Activated B cell treated with CpG ODN at 0.5 μM for 24 hours (primary cell): ENCODE measurements at regions of chr11 and their contacts with region 1.

Region 1: DNA sequence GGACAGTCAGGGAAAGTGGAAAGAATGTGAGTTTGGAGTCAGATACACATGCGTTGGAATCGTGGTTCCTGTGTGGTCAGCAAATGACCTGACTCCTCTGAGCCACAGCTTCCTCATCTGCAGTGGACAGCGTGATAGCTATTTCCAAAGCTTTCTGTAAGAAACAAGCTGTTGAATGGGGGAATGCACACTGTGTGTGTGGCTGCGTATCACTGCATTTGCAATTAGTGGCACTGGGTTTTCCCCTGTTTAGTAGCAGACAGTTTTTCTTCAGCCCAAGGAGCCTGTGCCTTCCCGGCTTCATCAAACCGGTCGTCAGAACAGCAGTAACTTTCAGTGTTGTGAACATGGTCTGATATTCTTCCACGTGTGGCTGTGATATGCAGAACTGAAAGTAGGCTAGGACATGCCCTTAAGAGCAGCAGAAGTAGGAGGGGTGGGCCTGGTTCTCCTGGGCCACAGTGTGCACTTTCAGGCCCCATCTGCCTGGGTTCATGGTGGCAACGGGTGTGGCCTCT is 121.5 kb downstream of the RRAS2 start:
- DNase-seq: peak; percentile 42
- ATAC-seq: peak; percentile 97
- H3K4me3 Mint-ChIP-seq: peak overlapping the region; percentile 42
- H3K27ac Mint-ChIP-seq: peak overlapping the region; percentile 89
- H3K4me1 Mint-ChIP-seq: peaks cover 39% of the 10 kb centered on the region
- H3K27me3 Mint-ChIP-seq: peaks cover 1% of the 10 kb centered on the region
- CTCF ChIP-seq: no peak

Region 2: DNA sequence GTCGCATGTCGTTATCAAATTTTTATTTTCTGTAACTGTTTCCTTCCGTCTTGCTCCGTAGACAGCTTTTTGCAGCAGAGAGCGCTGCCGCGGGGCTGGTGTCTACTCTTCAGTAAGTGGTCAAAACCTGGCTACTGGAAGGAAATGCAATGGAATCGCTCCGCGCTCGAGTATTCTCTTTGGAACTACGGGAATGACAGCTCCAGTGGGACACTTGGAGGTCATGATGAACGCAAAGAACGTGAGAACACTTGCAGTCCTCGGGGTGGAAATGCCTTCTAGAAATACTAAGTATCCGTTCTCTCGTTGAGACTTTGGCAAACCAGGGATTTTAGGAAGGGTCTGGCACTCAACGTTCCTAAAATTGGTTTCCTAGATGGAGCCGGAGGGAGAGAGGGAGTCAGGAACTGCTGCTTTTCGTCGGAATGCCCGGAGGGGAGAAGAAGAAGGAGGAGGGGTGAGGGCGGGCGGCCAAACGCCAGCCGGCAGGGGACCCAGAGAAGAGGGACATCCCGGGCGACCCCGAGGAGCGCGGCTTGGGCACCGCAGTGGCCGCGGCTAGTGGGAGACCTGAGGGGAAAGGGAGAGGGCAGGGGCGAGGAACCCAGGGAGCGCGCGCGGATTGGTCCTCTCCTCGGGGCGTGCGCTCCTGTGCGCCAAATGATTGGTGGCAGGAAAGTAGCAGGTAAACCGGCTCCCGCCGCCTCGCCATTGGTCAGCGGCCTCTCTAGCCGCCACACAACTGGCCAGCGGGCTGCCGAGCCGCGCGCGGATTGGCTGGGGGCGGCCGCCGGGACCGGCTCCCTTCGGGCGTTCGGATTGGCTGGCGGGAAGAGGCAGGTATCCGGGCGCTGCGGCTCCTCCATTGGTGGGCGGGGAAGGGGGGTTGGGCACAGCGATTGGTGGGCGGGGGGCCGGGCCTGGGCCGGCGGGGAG is 960.4 kb before region 1 on chr11:
- CTCF ChIA-PET with region 1: no interaction called
- POLR2A ChIA-PET with region 1: no interaction called
- intact Hi-C with region 1: loop called (anchors 5 kb)
- DNase-seq: peak; percentile 92
- ATAC-seq: peak; percentile 87
- H3K4me3 Mint-ChIP-seq: peak overlapping the region; percentile 97
- H3K27ac Mint-ChIP-seq: peak overlapping the region; percentile 82
- H3K4me1 Mint-ChIP-seq: peaks cover 36% of the 10 kb centered on the region
- H3K27me3 Mint-ChIP-seq: peaks cover 6% of the 10 kb centered on the region
- CTCF ChIP-seq: no peak

Region 3: GRCh38 chr11:13668102-13668956 is 569.2 kb before region 1 on chr11 and contains the start of gene FAR1:
- CTCF ChIA-PET with region 1: no interaction called
- POLR2A ChIA-PET with region 1: no interaction called
- intact Hi-C with region 1: loop called (anchors 1 kb)
- DNase-seq: peak; percentile 93
- ATAC-seq: peak; percentile 91
- H3K4me3 Mint-ChIP-seq: peak within 1 kb of the TSS; percentile 99
- H3K27ac Mint-ChIP-seq: peak within 1 kb of the TSS; percentile 95
- H3K4me1 Mint-ChIP-seq: peaks cover 44% of the 10 kb centered on the region
- H3K27me3 Mint-ChIP-seq: peaks cover 7% of the 10 kb centered on the region
- CTCF ChIP-seq: no peak
- total RNA-seq, gene FAR1: 39.2 and 48.4 TPM in 2 replicates

Region 4: DNA sequence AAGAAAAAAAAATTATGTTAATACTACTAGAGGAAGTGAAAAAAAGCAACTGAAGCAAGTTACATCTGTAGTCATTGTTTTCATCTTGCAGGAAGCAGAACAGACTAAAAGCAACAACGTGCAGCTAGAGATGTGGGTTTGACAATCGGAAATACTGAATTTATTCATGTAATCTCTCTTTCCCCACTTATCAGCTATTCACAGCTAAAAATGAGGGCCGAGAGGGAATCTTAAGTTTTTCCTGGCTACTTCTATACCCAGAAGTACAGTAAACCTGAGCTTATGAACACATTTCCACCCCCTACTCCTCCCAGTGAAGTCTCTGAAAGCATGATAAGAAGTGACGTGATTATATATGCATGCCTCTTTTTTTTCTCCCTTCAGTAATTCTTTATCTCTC is 158.5 kb before region 1 on chr11:
- CTCF ChIA-PET with region 1: no interaction called
- POLR2A ChIA-PET with region 1: no interaction called
- intact Hi-C with region 1: loop called (anchors 2 kb)
- DNase-seq: no peak
- ATAC-seq: peak; percentile 42
- H3K4me3 Mint-ChIP-seq: peak overlapping the region; percentile 59
- H3K27ac Mint-ChIP-seq: peak overlapping the region; percentile 3
- H3K4me1 Mint-ChIP-seq: peaks cover 19% of the 10 kb centered on the region
- H3K27me3 Mint-ChIP-seq: peaks cover 2% of the 10 kb centered on the region
- CTCF ChIP-seq: no peak

Region 5: DNA sequence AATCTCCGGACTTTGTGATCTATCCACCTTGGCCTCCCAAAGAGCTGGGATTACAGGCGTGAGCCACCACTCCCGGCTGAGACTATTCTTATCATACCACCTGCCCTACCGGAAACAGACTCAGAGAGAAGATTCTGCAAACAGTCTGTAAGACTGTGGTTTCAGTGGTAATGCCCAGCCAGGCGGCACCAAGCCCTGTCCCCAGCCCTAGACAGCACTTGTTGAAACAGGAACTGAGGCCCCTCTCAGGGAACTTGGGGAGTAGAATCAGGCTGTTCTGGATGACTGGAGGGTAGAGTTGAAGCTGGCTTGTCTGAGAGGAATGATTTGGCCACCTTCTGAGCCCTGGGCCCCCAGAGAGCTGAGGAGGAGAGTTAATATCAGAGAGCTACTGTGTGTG is 875.9 kb after region 1 on chr11:
- CTCF ChIA-PET with region 1: no interaction called
- POLR2A ChIA-PET with region 1: no interaction called
- intact Hi-C with region 1: loop called (anchors 1 kb)
- DNase-seq: peak; percentile 54
- ATAC-seq: peak; percentile 94
- H3K4me3 Mint-ChIP-seq: peak overlapping the region; percentile 70
- H3K27ac Mint-ChIP-seq: peak overlapping the region; percentile 79
- H3K4me1 Mint-ChIP-seq: peaks cover 77% of the 10 kb centered on the region
- H3K27me3 Mint-ChIP-seq: peaks cover 13% of the 10 kb centered on the region
- CTCF ChIP-seq: no peak